Endothelial cell of umbilical vein (primary cell): ENCODE measurements at regions of chr16 and their contacts with region 1.

Region 1: DNA sequence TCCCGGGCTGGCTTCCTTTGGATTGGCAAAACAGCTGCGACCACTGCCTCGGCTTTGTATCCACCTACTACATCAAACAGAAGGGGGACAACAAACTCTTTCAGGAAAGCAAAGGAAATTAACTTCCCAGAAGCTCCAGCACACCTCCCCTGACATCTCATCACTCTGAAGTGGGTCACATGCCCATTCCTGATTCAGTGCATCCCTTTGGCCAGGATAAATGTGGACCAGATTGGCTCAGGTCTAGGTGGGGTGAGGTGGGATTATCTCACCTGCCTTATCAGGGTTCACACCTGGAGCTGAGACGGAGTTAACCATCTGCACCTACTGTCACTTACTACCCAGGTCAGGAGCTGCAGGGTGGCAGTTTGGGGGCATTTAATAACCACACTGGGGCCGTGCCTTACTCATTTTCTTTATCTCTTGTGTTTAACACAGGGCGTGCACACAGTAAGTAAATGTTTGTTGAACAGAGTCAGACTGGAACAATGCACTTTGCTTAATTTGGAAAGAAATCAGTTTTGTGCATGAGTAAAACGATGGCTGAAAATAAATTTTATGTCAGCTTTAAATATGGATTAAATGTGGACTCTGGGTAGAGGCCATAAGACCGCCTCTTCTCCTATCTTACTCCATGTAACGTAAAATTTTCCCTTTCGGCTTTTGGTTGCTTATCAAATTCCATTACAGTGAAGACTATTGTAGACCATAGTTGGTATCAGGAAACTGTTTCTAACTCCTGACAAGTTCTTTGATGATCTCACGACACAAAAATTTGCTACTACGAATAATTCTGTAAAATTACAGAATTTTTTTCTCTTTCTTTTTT is 36.0 kb downstream of the IQCK start:
- DNase-seq: peak; percentile 86
- H3K4me3 ChIP-seq: peak overlapping the region in 1 of 3 experiments; percentile 8
- H3K27ac ChIP-seq: peak overlapping the region; percentile 78
- H3K4me1 ChIP-seq: peaks cover 29% of the 10 kb centered on the region
- H3K27me3 ChIP-seq: no peaks in the 10 kb centered on the region
- CTCF ChIP-seq: no peak
- POLR2A ChIP-seq: no peak

Region 2: GRCh38 chr16:19717771-19718602 is 36.0 kb before region 1 on chr16 and contains the starts of genes IQCK and KNOP1:
- CTCF ChIA-PET with region 1: no interaction called
- POLR2A ChIA-PET with region 1: no interaction called
- dilution Hi-C with region 1: no loop called
- intact Hi-C with region 1: loop called (anchors 1 kb)
- DNase-seq: peak; percentile 89
- H3K4me3 ChIP-seq: peak within 1 kb of the TSS; percentile 68 to 100 (median 99)
- H3K27ac ChIP-seq: peak within 1 kb of the TSS; percentile 81
- H3K4me1 ChIP-seq: peaks cover 13% of the 10 kb centered on the region
- H3K27me3 ChIP-seq: no peaks in the 10 kb centered on the region
- CTCF ChIP-seq: peak in 1 of 2 donors; percentile 15
- POLR2A ChIP-seq: peak; percentile 32
- total RNA-seq, gene IQCK: 13.2 and 17.2 TPM in 2 replicates
- total RNA-seq, gene KNOP1: 33.5 and 43.2 TPM in 2 replicates